ENCODE measurements at regions of chr3 and their contacts with region 1.

Region 1: DNA sequence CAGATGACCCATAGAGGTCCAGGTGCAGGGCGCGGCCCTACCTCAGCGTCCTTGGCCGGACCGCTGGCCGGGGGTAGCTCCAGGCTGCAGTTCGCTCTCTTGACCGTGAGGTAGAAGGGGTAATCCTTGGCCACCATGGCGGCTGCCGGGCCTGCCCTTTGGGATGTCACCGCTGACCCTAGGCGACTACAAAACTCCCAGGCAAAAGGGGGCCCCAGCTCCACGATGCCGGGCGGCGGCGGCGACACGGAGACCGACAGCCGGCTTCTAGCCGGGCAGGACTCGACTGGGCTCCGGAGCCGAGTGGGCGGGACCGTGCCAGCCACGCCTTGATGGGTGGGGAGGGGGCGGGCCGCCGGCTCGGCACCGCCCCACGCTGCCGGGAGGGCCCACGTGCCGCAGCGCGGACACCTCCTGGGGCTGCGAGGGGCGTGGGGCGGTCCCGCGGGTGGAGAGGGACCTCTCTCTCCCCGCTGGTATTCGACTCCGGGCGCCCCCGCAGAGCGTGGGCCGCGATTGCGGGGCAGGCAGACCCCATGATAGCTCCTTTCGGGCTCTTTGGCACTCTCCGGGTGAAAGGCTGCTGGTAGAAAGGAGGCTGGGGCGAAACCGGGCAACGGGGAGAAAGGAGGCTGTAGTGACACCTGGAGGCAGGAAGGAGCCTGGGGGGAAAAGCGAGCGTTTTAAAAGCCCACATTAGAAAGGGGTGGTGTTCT is at the start of gene ARHGEF3:
- DNase-seq: peak; percentile 85
- H3K4me3 Mint-ChIP-seq: peak within 1 kb of the TSS; percentile 87
- H3K27ac Mint-ChIP-seq: peak within 1 kb of the TSS; percentile 87
- H3K4me1 Mint-ChIP-seq: peaks cover 40% of the 10 kb centered on the region
- H3K27me3 Mint-ChIP-seq: no peaks in the 10 kb centered on the region
- total RNA-seq, gene ARHGEF3: 102 to 109 TPM

Region 2: GRCh38 chr3:56693750-56694149 is 108.1 kb before region 1 on chr3:
- CTCF ChIA-PET with region 1: interaction called, 59 read pairs
- POLR2A ChIA-PET with region 1: no interaction called
- DNase-seq: no peak
- H3K4me3 Mint-ChIP-seq: peak overlapping the region; percentile 37
- H3K27ac Mint-ChIP-seq: peak overlapping the region; percentile 90
- H3K4me1 Mint-ChIP-seq: peaks cover 42% of the 10 kb centered on the region
- H3K27me3 Mint-ChIP-seq: no peaks in the 10 kb centered on the region

Region 3: GRCh38 chr3:56753206-56753820 is 48.5 kb before region 1 on chr3:
- CTCF ChIA-PET with region 1: interaction called, 27 read pairs
- POLR2A ChIA-PET with region 1: interaction called, 3 read pairs
- DNase-seq: peak; percentile 30
- H3K4me3 Mint-ChIP-seq: peak overlapping the region; percentile 9
- H3K27ac Mint-ChIP-seq: peak overlapping the region; percentile 93
- H3K4me1 Mint-ChIP-seq: peaks cover 74% of the 10 kb centered on the region
- H3K27me3 Mint-ChIP-seq: no peaks in the 10 kb centered on the region

Region 4: DNA sequence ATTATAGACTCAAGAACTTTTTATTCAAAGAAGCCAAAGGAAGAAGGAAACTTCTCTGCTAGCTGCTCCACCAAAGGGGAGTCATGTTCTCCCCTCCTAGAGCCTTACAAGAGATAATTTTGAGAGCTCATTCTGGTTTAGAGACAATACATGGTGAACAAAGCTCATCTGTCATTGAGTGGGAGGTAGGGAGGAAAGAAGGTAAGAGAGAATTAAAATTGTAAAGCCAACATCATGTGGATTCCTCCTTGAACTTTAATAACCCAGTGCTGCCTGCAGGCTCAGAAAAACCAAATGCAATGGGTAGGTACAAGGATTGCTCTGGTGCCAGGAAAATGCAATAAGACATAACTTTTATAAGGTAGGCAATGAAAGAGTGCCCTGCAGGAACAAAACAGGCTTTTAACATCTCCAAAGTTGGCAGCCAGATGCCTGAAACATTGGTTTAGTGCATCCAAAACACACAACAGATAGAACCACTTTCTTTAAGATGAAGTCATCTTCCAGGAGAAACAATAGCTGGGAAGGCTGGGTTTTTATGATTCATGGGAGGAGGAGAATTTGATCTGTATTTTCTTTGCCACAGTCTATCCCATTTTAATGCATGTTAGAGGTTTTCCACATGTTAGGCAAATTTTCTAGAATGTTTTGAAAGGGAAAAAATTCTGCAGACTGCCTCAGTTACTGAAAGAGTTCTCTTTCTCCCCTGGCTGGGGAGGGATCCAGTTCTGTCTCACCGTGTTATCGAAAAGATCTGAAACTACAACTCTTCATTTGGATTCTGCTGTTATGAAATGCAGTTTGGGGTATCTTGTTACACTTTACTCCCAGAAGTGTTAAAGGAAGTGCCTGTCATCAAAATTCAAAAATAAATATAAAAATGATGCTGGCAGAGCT is 11.2 kb after region 1 on chr3:
- CTCF ChIA-PET with region 1: interaction called, 39 read pairs
- POLR2A ChIA-PET with region 1: no interaction called
- DNase-seq: no peak
- H3K4me3 Mint-ChIP-seq: no peak overlapping the region
- H3K27ac Mint-ChIP-seq: peak overlapping the region; percentile 32
- H3K4me1 Mint-ChIP-seq: peaks cover 48% of the 10 kb centered on the region
- H3K27me3 Mint-ChIP-seq: no peaks in the 10 kb centered on the region

Region 5: GRCh38 chr3:56915966-56916586 is 114.3 kb after region 1 on chr3:
- CTCF ChIA-PET with region 1: interaction called, 10 read pairs
- POLR2A ChIA-PET with region 1: no interaction called
- DNase-seq: peak; percentile 87
- H3K4me3 Mint-ChIP-seq: peak overlapping the region; percentile 91
- H3K27ac Mint-ChIP-seq: peak overlapping the region; percentile 98
- H3K4me1 Mint-ChIP-seq: peaks cover 79% of the 10 kb centered on the region
- H3K27me3 Mint-ChIP-seq: no peaks in the 10 kb centered on the region